ENCODE measurements at regions of chr3 and their contacts with region 1.

Region 1: GRCh38 chr3:124584552-124585391 is 145.5 kb upstream of the UMPS start:
- DNase-seq: peak; percentile 73
- ATAC-seq: peak; percentile 96
- H3K4me3 ChIP-seq: peak overlapping the region; percentile 73 to 89 (median 80)
- H3K27ac ChIP-seq: peak overlapping the region; percentile 63
- H3K4me1 ChIP-seq: peaks cover 66% of the 10 kb centered on the region
- H3K27me3 ChIP-seq: no peaks in the 10 kb centered on the region; a peak in 1 of 5 replicates
- CTCF ChIP-seq: peak; percentile 18; the same call in 1 of the 2 replicates
- EP300 ChIP-seq: no peak
- POLR2A ChIP-seq: peak; percentile 31 to 80; a peak in 3 of 4 replicates
- RAD21 ChIP-seq: no peak

Region 2: GRCh38 chr3:124620600-124621063 is 35.9 kb after region 1 on chr3:
- CTCF ChIA-PET with region 1: no interaction called
- POLR2A ChIA-PET with region 1: interaction called, 10 read pairs
- in situ Hi-C with region 1: loop called (anchors 5 kb)
- intact Hi-C with region 1: loop called (anchors 1 kb)
- DNase-seq: peak; percentile 96
- ATAC-seq: peak; percentile 97
- H3K4me3 ChIP-seq: peak overlapping the region; percentile 28 to 48 (median 31); a peak in 4 of 6 replicates
- H3K27ac ChIP-seq: peak overlapping the region; percentile 95
- H3K4me1 ChIP-seq: peaks cover 83% of the 10 kb centered on the region
- H3K27me3 ChIP-seq: no peaks in the 10 kb centered on the region
- CTCF ChIP-seq: no peak
- EP300 ChIP-seq: peak; percentile 32 to 97; a peak in 3 of 4 replicates
- POLR2A ChIP-seq: peak in 1 of 2 experiments; percentile 59; a peak in 2 of 4 replicates
- RAD21 ChIP-seq: 0 out of 2 replicates have a peak, but pooled peaks have one; percentile 23

Region 3: DNA sequence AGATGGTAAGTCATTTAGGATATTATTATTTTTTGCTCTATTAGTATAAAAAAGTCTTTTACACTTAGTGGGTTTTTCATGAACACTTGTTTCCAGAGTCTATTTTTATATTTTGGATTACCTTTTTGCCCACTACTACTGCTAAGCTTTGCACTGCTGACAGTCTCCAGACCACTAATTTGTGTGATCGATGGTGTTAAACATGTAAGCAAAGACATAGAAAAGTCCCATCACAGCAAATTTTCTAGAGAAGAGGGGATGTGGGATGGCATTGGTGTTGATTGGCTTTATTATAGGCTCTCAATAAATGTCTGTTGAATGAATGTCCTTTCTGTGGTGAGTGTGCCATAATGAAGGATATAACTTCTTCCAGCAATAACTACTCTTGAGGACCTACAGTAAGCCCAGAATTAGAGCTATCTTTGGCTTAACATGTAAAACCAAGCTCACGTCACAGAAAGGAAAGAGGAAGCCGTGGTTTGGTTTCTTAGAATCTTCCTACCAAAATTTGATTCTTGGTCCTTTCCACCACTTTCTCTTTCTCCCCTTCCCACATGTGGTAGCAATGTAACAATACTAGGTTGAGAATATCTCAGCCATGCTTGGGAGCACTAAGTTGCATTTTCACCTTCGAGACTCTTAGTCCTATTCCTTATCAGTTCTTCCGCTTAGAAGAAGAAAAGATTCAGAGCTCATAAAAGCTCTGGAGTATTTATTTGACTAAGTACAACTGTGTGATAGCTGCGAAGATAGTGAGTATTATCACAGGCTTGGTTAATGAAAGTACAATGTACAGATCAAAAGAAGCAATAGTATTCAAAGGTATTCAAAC is 54.9 kb after region 1 on chr3:
- CTCF ChIA-PET with region 1: no interaction called
- POLR2A ChIA-PET with region 1: interaction called, 21 read pairs
- in situ Hi-C with region 1: no loop called
- intact Hi-C with region 1: loop called (anchors 5 kb)
- DNase-seq: no peak
- ATAC-seq: no peak
- H3K4me3 ChIP-seq: no peak overlapping the region
- H3K27ac ChIP-seq: no peak overlapping the region
- H3K4me1 ChIP-seq: peaks cover 38% of the 10 kb centered on the region
- H3K27me3 ChIP-seq: no peaks in the 10 kb centered on the region
- CTCF ChIP-seq: no peak
- EP300 ChIP-seq: no peak
- POLR2A ChIP-seq: no peak
- RAD21 ChIP-seq: no peak

Region 4: DNA sequence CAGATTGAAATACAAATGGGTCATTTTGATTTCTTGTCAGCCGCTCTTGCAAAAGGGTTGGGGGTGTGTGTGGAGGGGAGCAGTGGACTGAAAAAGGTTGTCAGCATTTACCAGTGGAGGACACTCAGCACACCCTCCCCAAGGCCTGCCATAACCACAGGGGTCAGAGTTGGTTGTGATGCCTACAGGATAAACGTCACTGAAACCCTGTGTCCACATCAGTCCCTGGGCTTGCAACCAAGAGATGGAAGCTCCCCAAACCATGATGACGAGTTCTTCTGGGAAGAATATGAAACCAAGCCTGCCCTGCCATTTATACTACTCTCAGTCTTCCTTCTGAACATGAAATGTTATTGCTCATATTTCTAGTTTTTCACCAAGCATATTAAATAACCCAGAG is 91.5 kb after region 1 on chr3:
- CTCF ChIA-PET with region 1: no interaction called
- POLR2A ChIA-PET with region 1: no interaction called
- in situ Hi-C with region 1: no loop called
- intact Hi-C with region 1: no loop called
- DNase-seq: no peak
- ATAC-seq: no peak
- H3K4me3 ChIP-seq: no peak overlapping the region
- H3K27ac ChIP-seq: no peak overlapping the region
- H3K4me1 ChIP-seq: no peaks in the 10 kb centered on the region
- H3K27me3 ChIP-seq: no peaks in the 10 kb centered on the region
- CTCF ChIP-seq: no peak
- EP300 ChIP-seq: no peak
- POLR2A ChIP-seq: no peak
- RAD21 ChIP-seq: no peak

Measured in HepG2 (cell line).